ENCODE measurements at regions of chr1 and their contacts with region 1.

Region 1: GRCh38 chr1:168439456-168440375 is 104.1 kb downstream of the XCL2 start:
- DNase-seq: peak; percentile 91
- H3K4me3 Mint-ChIP-seq: no peak overlapping the region
- H3K27ac Mint-ChIP-seq: no peak overlapping the region
- H3K4me1 Mint-ChIP-seq: peaks cover 22% of the 10 kb centered on the region
- H3K27me3 Mint-ChIP-seq: peaks cover 4% of the 10 kb centered on the region
- CTCF ChIP-seq: peak; percentile 91

Region 2: DNA sequence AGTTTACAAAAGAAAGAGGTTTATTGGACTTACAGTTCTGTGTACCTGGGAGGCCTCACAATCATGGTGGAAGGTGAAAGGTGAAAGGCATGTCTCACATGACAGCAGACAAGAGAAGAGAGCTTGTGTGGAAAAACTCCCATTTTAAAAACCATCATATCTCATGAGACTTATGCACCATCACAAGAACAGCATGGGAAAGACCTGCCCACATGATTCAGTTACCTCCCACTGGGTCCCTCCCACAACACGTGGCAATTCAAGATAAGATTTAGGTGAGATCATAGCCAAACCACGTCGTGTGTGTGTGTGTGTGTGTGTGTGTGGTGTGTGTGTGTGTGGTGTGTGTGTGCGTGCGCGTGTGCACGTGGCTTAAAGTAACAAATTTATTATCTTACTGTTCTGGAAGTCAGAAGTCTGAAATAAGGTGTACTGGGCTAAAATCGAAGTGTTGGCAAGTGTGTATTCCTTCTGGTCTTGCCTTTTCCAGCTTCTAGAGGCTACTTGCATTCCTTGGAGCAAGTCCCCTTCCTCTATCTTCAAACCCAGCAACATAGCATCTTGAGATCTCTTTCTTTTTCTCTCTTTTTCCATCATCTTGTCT is 454.7 kb before region 1 on chr1:
- CTCF ChIA-PET with region 1: no interaction called
- POLR2A ChIA-PET with region 1: no interaction called
- intact Hi-C with region 1: no loop called
- DNase-seq: no peak
- H3K4me3 Mint-ChIP-seq: no peak overlapping the region
- H3K27ac Mint-ChIP-seq: peak overlapping the region; percentile 89
- H3K4me1 Mint-ChIP-seq: peaks cover 10% of the 10 kb centered on the region
- H3K27me3 Mint-ChIP-seq: no peaks in the 10 kb centered on the region
- CTCF ChIP-seq: no peak

Region 3: GRCh38 chr1:168428063-168428731 is 11.5 kb before region 1 on chr1:
- CTCF ChIA-PET with region 1: interaction called, 19 read pairs
- POLR2A ChIA-PET with region 1: interaction called, 4 read pairs
- intact Hi-C with region 1: no loop called
- DNase-seq: no peak
- H3K4me3 Mint-ChIP-seq: no peak overlapping the region
- H3K27ac Mint-ChIP-seq: no peak overlapping the region
- H3K4me1 Mint-ChIP-seq: no peaks in the 10 kb centered on the region
- H3K27me3 Mint-ChIP-seq: peaks cover 2% of the 10 kb centered on the region
- CTCF ChIP-seq: no peak

Region 4: DNA sequence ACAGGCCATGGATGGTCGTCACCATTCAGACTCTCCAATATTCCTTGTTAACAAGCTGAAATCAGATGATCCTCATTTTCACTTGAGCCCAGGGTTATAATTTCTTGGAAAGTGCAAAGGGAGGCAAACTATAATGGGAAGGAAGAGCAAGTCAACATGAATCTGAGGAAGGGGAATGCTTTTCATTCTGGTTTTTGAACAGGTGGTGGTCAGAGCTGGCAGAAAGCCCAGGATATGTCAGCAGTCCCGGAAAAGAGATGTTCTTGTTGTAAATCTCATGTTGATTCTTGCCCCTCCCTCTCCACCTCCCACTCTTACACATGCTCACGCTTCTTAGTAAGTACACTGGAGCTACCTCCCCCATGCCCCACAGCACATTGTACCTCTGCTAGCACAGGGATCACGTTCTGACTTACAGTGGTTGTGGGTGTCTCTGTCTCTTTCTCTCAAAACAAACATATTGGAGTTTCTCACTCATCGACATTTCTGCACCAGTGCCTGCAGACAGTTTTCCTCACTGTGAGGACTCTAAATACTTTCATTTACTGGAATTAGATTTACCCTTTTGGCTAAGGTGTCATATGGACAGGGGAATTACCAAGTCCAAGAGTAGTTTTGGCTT is 26.5 kb after region 1 on chr1:
- CTCF ChIA-PET with region 1: interaction called, 12 read pairs
- POLR2A ChIA-PET with region 1: interaction called, 3 read pairs
- intact Hi-C with region 1: no loop called
- DNase-seq: peak; percentile 80
- H3K4me3 Mint-ChIP-seq: no peak overlapping the region
- H3K27ac Mint-ChIP-seq: peak overlapping the region; percentile 3
- H3K4me1 Mint-ChIP-seq: peaks cover 47% of the 10 kb centered on the region
- H3K27me3 Mint-ChIP-seq: no peaks in the 10 kb centered on the region
- CTCF ChIP-seq: no peak

Region 5: GRCh38 chr1:168572633-168573032 is 132.9 kb after region 1 on chr1:
- CTCF ChIA-PET with region 1: interaction called, 20 read pairs
- POLR2A ChIA-PET with region 1: interaction called, 3 read pairs
- intact Hi-C with region 1: loop called (anchors 1 kb)
- DNase-seq: no peak
- H3K4me3 Mint-ChIP-seq: no peak overlapping the region
- H3K27ac Mint-ChIP-seq: no peak overlapping the region
- H3K4me1 Mint-ChIP-seq: no peaks in the 10 kb centered on the region
- H3K27me3 Mint-ChIP-seq: peaks cover 26% of the 10 kb centered on the region
- CTCF ChIP-seq: no peak